Dendritic cell treated with granulocyte-macrophage colony-stimulating factor and Interleukin-4, amounts not matched to agents 40 ng/mL and 50 ng/mL, for 4 days (primary cell): ENCODE measurements at regions of chr1 and their contacts with region 1.

Region 1: DNA sequence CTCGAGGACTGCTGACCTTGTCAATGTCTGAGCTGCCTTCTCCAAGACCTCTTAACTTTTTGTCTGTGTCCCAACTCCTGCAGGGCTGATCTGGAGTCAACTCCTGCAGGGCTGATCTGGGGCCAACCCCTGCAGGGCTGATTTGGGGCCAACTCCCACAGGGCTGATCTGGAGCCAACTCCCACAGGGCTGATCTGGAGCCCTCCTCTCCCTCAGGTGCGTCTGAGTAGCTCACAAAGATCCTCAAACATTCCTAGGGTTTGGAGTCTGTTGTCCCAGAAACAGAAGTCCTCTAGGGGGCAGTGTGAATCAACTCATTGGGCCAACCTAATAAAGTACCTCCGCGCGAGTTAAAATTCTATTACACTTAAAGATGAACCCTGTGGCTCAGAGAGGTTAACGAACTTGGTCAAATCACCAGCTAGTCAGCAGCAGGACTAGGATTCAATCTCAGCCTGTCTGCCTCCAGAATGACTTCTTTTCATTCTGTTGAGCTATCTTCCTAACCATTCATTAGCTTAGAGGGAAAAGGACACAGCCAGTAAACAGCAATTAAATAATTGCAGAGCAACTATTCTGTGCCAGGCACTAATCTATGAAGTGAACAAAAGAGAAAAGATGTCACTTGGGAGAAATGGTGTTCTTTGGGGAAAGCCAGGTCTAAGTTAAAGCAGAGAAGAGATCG is 17.2 kb upstream of the RLF start:
- H3K4me3 Mint-ChIP-seq: no peak overlapping the region
- H3K27ac Mint-ChIP-seq: no peak overlapping the region
- H3K4me1 Mint-ChIP-seq: peaks cover 25% of the 10 kb centered on the region
- H3K27me3 Mint-ChIP-seq: peaks cover 15% of the 10 kb centered on the region

Region 2: DNA sequence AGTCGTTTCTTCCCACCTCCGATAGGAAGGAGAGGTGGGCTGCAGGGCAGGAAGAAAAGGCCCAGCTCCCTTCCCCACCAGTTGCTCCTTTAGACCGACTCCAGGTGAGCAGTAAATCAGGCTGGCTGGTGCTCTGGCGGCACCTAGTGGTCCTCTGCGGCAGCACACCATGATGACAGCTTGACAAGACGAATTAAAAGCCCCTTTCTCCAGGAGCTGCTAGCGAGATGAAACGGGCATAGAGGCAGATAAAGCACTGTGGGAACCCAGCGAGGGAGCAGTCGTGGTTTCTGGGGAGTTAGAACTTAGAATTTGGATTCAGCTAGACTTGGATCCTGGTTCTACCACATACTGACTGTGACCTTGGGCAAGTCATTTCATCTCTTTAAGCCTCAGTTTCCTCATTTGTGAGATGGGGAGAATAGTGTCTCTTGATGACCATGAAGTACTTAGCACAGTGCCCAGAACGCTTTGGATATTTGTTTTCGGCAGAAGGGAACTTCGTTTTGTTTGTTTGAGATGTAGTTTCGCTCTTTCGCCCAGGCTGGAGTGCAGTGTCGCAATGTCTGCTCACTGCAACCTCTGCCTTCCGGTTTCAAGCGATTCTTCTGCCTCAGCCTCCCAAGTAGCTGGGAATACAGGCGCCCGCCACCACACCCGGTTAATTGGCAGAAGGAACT is 194.9 kb after region 1 on chr1:
- intact Hi-C with region 1: loop called (anchors 5 kb)
- H3K4me3 Mint-ChIP-seq: peak overlapping the region; percentile 68
- H3K27ac Mint-ChIP-seq: peak overlapping the region; percentile 89
- H3K4me1 Mint-ChIP-seq: peaks cover 60% of the 10 kb centered on the region
- H3K27me3 Mint-ChIP-seq: no peaks in the 10 kb centered on the region

Region 3: GRCh38 chr1:40404670-40405462 is 260.8 kb after region 1 on chr1:
- intact Hi-C with region 1: loop called (anchors 5 kb)
- H3K4me3 Mint-ChIP-seq: no peak overlapping the region
- H3K27ac Mint-ChIP-seq: peak overlapping the region; percentile 75
- H3K4me1 Mint-ChIP-seq: peaks cover 53% of the 10 kb centered on the region
- H3K27me3 Mint-ChIP-seq: no peaks in the 10 kb centered on the region